Calu3 (cell line): ENCODE measurements at regions of chr7 and their contacts with region 1.

Region 1: DNA sequence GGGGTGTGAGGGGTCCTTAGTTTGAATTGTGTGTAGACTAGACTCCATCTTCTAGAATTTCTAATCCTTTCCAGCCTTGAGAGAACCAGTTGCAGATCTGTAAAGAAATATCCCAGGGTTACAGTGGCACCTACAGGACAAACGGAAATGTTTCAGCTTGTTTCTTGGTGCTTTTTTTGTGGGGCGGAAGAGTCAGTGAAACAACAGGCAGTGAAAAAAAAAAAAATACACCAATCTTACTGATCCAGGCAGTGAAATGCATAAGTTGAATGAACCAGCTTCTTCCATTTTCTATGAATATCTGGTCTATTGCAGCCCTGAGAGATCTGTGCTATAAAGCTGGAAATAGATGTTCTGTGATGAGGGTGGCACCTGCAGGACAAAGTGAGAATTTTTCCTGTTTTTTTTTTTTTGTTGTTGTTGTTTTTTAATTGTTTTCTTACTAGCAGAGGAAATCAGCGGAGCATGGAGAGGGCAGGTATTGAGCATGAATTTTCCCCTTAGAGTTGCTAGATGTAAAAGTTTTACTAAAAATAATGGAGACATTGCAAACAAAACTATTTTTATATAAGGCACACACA is 81.9 kb upstream of the DYNC1I1 start:
- DNase-seq: peak; percentile 14
- H3K4me3 Mint-ChIP-seq: peak overlapping the region; percentile 42
- H3K27ac Mint-ChIP-seq: no peak overlapping the region
- H3K4me1 Mint-ChIP-seq: peaks cover 15% of the 10 kb centered on the region
- H3K27me3 Mint-ChIP-seq: no peaks in the 10 kb centered on the region
- CTCF ChIP-seq: no peak

Region 2: GRCh38 chr7:94295850-94296249 is 1394.6 kb before region 1 on chr7:
- CTCF ChIA-PET with region 1: no interaction called
- intact Hi-C with region 1: loop called (anchors 5 kb)
- DNase-seq: no peak
- H3K4me3 Mint-ChIP-seq: no peak overlapping the region
- H3K27ac Mint-ChIP-seq: no peak overlapping the region
- H3K4me1 Mint-ChIP-seq: peaks cover 8% of the 10 kb centered on the region
- H3K27me3 Mint-ChIP-seq: no peaks in the 10 kb centered on the region
- CTCF ChIP-seq: no peak

Region 3: GRCh38 chr7:95511716-95512260 is 178.7 kb before region 1 on chr7:
- CTCF ChIA-PET with region 1: interaction called, 26 read pairs
- intact Hi-C with region 1: loop called (anchors 1 kb)
- DNase-seq: peak; percentile 53
- H3K4me3 Mint-ChIP-seq: no peak overlapping the region
- H3K27ac Mint-ChIP-seq: no peak overlapping the region
- H3K4me1 Mint-ChIP-seq: no peaks in the 10 kb centered on the region
- H3K27me3 Mint-ChIP-seq: no peaks in the 10 kb centered on the region
- CTCF ChIP-seq: peak; percentile 62

Region 4: GRCh38 chr7:95527033-95527775 is 163.3 kb before region 1 on chr7:
- CTCF ChIA-PET with region 1: interaction called, 18 read pairs
- intact Hi-C with region 1: loop called (anchors 1 kb)
- DNase-seq: peak; percentile 55
- H3K4me3 Mint-ChIP-seq: no peak overlapping the region
- H3K27ac Mint-ChIP-seq: no peak overlapping the region
- H3K4me1 Mint-ChIP-seq: peaks cover 23% of the 10 kb centered on the region
- H3K27me3 Mint-ChIP-seq: no peaks in the 10 kb centered on the region
- CTCF ChIP-seq: peak; percentile 50

Region 5: DNA sequence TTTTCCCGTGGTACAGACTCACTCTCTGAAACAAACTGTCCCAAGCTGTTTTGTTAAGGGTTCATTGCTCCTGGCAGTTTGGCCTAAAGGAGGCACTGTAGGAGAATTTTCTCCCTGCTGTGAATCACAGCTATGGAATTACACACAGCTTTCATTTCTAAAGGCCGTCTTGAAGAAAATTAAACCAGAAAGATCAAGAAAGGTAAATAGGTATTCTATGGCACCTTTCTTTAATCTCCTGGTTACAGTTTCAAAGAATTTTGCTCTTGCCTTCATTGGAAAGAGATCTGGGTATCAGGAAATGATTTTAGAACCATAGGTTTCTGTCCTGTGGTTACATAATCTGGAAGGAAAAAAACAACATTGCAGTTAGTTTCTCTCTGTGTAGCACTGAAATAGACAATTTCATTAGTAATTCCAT is 145.4 kb before region 1 on chr7:
- CTCF ChIA-PET with region 1: interaction called, 29 read pairs
- intact Hi-C with region 1: no loop called
- DNase-seq: peak; percentile 43
- H3K4me3 Mint-ChIP-seq: peak overlapping the region; percentile 64
- H3K27ac Mint-ChIP-seq: peak overlapping the region; percentile 92
- H3K4me1 Mint-ChIP-seq: peaks cover 16% of the 10 kb centered on the region
- H3K27me3 Mint-ChIP-seq: no peaks in the 10 kb centered on the region
- CTCF ChIP-seq: peak; percentile 20